Ovary (tissue), 10 donors: ENCODE measurements at regions of chr2 and their contacts with region 1.

Region 1: GRCh38 chr2:106582148-106583143 is 95.3 kb downstream of the CD8B2 start:
- DNase-seq: peak; percentile 66 to 82 (median 77)
- H3K4me3 ChIP-seq: peak overlapping the region; percentile 27
- H3K27ac ChIP-seq: no peak overlapping the region
- H3K4me1 ChIP-seq: no peaks in the 10 kb centered on the region
- H3K27me3 ChIP-seq: no peaks in the 10 kb centered on the region
- CTCF ChIP-seq: peak; percentile 46 to 70 (median 68)
- EP300 ChIP-seq: no peak
- POLR2A ChIP-seq: no peak

Region 2: DNA sequence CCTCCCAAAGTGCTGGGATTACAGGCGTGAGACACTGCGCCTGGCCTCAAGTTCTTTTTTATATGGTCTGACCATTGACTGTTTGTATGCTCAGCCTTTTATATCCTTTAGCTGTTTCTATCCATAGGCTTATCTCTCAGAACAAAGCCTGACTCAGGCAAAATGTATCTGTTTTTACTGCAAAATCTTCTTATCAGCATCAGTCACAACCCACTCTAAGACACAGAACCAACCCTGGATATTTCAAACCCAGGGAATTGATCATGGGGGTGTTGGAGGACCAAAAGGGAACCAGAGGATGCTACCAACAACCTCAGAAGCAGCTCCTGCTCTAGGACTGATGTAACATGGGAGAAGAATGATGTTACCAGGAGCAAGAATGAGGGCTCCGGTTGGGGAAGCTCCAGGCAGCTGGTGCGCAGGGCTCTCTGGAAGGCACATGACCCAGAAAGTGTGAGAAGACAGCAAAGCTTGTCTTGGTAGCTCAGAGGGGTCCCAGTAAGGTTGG is 913.0 kb before region 1 on chr2:
- intact Hi-C with region 1: loop called in 1 of 4 experiments (anchors 5 kb)
- DNase-seq: no peak
- H3K4me3 ChIP-seq: no peak overlapping the region
- H3K27ac ChIP-seq: no peak overlapping the region
- H3K4me1 ChIP-seq: no peaks in the 10 kb centered on the region
- H3K27me3 ChIP-seq: no peaks in the 10 kb centered on the region
- CTCF ChIP-seq: no peak
- EP300 ChIP-seq: no peak
- POLR2A ChIP-seq: no peak

Region 3: GRCh38 chr2:106104332-106105062 is 477.9 kb before region 1 on chr2:
- intact Hi-C with region 1: loop called in 2 of 4 experiments (anchors 5 to 10 kb)
- DNase-seq: peak in 4 of 5 donors; percentile 42 to 63 (median 54)
- H3K4me3 ChIP-seq: no peak overlapping the region
- H3K27ac ChIP-seq: no peak overlapping the region
- H3K4me1 ChIP-seq: peaks cover 5% of the 10 kb centered on the region
- H3K27me3 ChIP-seq: no peaks in the 10 kb centered on the region
- CTCF ChIP-seq: peak; percentile 54 to 80 (median 75)
- EP300 ChIP-seq: no peak
- POLR2A ChIP-seq: no peak

Region 4: DNA sequence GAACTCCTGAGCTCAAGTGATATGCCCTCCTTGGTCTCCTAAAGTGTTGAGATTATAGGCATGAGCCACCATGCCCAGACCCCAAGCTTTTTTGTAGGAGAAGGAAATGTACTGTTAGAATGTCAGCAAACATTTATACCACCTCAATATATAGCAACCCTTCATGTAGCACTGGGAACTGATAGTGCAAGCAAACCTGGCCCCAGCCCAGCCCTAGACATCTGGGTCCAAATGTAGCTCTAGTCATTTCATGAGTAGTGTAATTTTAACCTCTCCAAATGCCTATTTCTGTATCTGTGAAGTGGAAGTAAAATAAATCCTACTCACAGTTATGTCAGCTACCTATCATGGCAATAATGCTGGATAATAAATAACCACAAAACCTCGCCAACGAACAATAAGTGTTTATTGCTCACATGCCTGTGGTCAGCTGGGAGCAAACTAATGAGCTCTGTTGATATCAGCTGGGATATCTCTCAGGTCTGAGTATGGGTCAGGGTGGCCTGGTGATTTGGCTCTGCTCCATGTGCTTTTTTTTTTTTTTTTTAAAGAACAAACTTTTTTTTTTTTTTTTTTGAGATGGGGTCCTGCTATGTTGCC is 85.1 kb after region 1 on chr2:
- intact Hi-C with region 1: no loop called
- DNase-seq: no peak
- H3K4me3 ChIP-seq: no peak overlapping the region
- H3K27ac ChIP-seq: no peak overlapping the region
- H3K4me1 ChIP-seq: no peaks in the 10 kb centered on the region
- H3K27me3 ChIP-seq: no peaks in the 10 kb centered on the region
- CTCF ChIP-seq: no peak
- EP300 ChIP-seq: no peak
- POLR2A ChIP-seq: no peak